Posterior cingulate gyrus (tissue), 11 donors: ENCODE measurements at regions of chr4 and their contacts with region 1.

Region 1: GRCh38 chr4:143335979-143336780 is 496 bp upstream of the GAB1 start:
- DNase-seq: peak; percentile 76 to 97 (median 85)

Region 2: DNA sequence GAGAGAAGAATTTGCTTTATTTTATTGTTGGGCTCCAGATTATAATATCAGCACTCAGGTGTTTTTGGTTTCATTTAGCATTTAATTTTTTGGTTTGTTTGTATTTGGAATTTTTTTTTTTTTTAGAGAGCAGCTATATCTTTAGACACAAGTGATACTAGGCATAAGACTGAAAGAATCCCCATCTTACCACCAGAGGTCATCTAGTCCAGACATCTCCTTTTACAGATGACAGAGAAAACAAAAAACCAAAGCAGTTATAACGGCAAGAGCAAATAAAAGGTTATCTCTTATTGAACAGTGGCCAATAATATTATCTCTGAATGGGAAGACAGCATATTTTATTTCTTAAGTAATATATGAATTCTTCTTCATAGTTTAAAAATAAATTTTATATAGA is 128.6 kb before region 1 on chr4:
- intact Hi-C with region 1: loop called (anchors 5 kb)
- DNase-seq: no peak

Region 3: GRCh38 chr4:143375313-143376073 is 39.3 kb after region 1 on chr4:
- intact Hi-C with region 1: loop called (anchors 2 kb)
- DNase-seq: peak; percentile 46 to 94 (median 66)

Region 4: DNA sequence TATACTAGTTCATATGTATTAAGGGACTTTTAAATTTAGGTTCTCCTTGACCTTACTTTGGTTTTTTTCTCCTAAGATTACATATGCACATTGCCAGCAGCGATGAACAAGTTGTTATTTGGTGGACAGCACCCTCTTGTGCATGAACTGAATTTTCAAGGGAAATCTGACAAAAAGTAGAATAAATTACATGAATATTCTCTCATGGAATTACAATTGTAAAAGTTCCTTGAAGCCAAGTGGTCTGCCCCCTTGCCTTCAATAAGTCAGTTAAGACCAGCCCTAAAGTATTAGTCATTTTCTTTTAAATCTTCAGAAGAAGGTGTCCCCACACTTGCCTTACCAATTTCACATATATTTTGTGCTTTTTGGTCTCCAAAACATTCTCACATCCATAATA is 146.7 kb after region 1 on chr4:
- intact Hi-C with region 1: loop called (anchors 5 kb)
- DNase-seq: peak in 2 of 10 donors; percentile 21 to 52

Region 5: GRCh38 chr4:143513306-143514168 is 177.4 kb after region 1 on chr4 and contains the start of gene SMARCA5:
- intact Hi-C with region 1: loop called (anchors 5 kb)
- DNase-seq: peak; percentile 90 to 99 (median 91)